HEK293 (cell line): ENCODE measurements at regions of chr6 and their contacts with region 1.

Region 1: DNA sequence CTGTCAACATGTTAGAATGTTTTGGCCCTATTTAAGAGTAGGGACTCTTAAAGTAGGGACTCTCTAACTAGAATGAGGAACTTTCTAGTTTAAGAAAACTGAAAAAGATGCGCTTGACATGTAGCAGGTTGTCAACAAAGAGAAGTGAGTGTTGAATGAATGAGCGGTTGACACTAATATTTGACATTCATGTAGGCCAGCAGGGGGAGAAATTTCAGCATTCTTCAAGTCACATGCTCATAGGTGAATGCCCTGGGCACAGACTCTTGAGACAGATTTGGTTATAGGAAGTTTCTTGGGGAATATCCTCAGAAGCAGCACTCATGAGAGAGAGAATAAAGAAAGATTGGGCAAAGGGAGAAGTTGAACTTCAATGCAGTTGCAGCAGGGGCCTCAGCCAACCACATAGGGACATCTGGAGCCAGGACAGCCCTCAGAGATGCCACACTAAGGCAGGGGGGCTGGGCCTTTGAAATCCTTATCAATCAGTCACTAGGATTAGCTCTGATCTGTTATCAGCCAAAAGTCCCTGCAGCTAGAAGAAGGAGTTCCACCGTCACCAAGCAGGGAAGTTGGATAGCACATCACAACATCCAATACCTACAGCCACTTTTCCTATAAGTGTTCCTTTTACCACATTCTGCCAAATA is 145.1 kb upstream of the FKBP1C start:
- H3K4me3 ChIP-seq: no peak overlapping the region
- H3K27ac ChIP-seq: no peak overlapping the region
- H3K4me1 ChIP-seq: no peaks in the 10 kb centered on the region
- CTCF ChIP-seq: no peak

Region 2: DNA sequence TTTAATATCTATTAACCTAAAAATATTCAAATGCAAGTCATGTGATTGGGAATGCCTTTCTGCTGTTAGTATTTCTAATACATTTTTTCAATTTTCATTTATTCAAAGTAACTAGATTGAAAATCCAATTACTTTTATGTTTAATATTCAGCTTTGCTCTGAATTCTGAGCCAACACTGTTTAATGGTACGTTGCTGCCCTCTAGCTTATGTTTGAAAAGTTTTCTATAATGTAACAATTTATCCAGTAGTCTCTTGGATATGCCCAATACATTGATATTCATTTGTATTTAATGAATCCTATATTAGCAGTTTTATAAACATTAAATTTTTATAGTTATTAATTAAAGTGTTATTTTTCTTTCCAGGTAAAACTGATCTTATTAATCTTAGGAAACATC is 206.2 kb after region 1 on chr6:
- CTCF ChIA-PET with region 1: interaction called, 16 read pairs
- POLR2A ChIA-PET with region 1: no interaction called
- H3K4me3 ChIP-seq: no peak overlapping the region
- H3K27ac ChIP-seq: no peak overlapping the region
- H3K4me1 ChIP-seq: no peaks in the 10 kb centered on the region
- CTCF ChIP-seq: no peak